Activated B cell treated with CpG ODN at 0.5 μM for 24 hours (primary cell): ENCODE measurements at regions of chr3 and their contacts with region 1.

Region 1: GRCh38 chr3:100708967-100709841 is at the start of gene TFG:
- DNase-seq: peak; percentile 97
- ATAC-seq: peak; percentile 90
- H3K4me3 Mint-ChIP-seq: peak within 1 kb of the TSS; percentile 88
- H3K27ac Mint-ChIP-seq: peak within 1 kb of the TSS; percentile 92
- H3K4me1 Mint-ChIP-seq: peaks cover 40% of the 10 kb centered on the region
- H3K27me3 Mint-ChIP-seq: peaks cover 17% of the 10 kb centered on the region
- CTCF ChIP-seq: no peak
- total RNA-seq, gene TFG: 42.5 and 44.5 TPM in 2 replicates

Region 2: DNA sequence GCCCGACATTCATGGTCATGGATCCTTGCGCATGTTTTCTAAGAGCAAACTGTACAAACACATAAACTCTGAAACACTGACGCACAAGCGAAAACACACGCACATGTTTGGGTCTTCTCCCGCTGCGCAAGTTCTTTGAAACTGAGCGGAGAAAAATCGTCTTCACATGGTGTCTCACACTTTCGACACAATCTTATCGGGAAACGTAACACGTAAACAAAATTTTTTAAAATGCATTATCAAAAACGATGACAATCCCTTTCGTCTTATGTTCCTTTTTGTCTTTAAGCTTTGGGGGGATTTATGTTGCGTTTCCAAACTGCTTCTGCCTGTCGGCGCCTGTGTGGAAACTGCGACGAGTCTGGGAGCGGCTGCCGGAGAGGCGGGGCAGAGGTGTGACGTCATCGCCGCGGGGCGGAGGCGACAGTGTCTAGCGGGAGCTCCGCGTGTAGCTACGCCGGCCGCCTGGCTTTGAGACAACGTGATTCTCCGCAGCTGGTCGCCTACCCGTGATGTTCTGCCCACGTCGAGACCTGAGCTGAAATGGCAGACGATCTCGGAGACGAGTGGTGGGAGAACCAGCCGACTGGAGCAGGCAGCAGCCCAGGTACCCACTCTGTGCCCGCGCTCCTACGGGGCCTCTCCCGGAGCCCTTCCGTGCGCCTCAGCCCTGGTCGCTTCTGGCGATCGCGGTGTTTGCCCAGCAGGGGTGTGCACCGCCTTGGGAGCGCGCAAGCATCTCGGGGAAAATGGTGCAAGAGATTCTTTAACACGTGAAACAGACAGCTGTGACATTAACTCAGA is 891.6 kb before region 1 on chr3 and contains the start of gene CMSS1:
- CTCF ChIA-PET with region 1: no interaction called
- POLR2A ChIA-PET with region 1: no interaction called
- intact Hi-C with region 1: loop called (anchors 2 kb)
- DNase-seq: peak; percentile 96
- ATAC-seq: peak; percentile 94
- H3K4me3 Mint-ChIP-seq: peak within 1 kb of the TSS; percentile 97
- H3K27ac Mint-ChIP-seq: peak within 1 kb of the TSS; percentile 99
- H3K4me1 Mint-ChIP-seq: peaks cover 37% of the 10 kb centered on the region
- H3K27me3 Mint-ChIP-seq: no peaks in the 10 kb centered on the region
- CTCF ChIP-seq: no peak
- total RNA-seq, gene CMSS1: 37.4 and 41.1 TPM in 2 replicates

Region 3: DNA sequence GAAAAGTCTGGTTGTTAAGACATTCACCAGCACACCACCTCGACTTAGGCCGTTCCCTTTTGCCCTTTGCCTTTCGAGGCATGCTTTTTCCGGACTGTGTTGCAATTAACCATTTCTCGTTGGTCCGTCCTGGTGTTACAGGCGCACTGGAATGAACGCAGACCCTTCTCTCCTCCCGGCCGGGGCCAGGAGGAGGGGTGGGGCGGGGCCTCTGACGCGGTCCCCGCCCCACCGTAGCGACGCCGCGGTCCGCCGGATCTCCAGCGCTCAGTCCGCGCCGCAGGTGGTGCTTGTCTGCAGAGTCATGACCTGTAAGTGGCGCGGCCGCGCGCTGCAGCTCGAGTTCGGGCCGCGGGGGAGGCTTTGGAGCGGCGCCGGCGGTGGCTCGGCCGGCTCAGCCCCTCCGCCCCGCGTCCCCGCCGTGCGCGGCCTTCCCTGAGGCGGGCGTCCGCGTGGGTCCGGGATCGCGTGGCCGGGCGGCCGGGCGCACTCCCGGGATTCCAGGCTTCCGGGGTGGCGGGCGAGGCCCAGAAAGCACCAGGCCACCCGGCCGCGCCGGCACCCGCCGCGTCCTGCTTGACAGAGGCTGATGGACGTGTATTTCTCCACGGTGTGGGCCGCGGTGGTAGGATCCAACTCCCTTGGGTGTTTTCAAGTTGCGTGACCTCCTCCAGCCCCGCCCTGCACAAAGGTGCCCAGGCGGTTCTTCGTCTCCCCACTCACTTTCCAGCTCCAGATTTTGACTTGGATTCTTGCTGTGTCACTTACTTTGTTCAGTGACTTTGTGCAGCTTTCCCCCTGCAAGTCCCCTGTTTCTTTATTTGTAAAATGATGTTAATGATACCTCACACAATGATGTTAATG is 374.5 kb before region 1 on chr3 and contains the start of gene NIT2:
- CTCF ChIA-PET with region 1: no interaction called
- POLR2A ChIA-PET with region 1: interaction called, 5 read pairs
- intact Hi-C with region 1: loop called (anchors 1 kb)
- DNase-seq: peak; percentile 72
- ATAC-seq: peak; percentile 96
- H3K4me3 Mint-ChIP-seq: peak within 1 kb of the TSS; percentile 91
- H3K27ac Mint-ChIP-seq: peak within 1 kb of the TSS; percentile 92
- H3K4me1 Mint-ChIP-seq: peaks cover 19% of the 10 kb centered on the region
- H3K27me3 Mint-ChIP-seq: no peaks in the 10 kb centered on the region
- CTCF ChIP-seq: no peak
- total RNA-seq, gene NIT2: 52.0 and 55.6 TPM in 2 replicates

Region 4: DNA sequence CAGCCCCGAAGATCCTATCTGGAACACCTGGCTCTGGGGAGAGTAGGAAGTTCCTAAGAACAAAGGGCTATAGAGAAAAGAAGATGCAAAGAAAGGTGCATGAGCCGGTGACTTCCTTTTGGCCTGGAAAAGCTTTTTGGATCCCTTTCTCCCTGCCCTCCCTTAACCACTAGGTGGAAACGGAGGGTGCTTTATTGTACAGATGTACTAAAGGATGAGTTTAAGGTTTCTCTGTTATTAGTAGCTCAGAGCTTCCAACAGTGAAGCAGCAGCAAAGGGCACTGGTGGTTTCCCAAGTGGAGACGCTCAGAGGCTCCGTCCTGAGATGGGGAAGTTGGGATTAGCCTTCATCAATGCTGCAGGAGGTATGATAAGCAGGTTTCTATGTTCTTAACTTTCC is 105.7 kb before region 1 on chr3:
- CTCF ChIA-PET with region 1: interaction called, 3 read pairs
- POLR2A ChIA-PET with region 1: no interaction called
- intact Hi-C with region 1: loop called (anchors 2 kb)
- DNase-seq: no peak
- ATAC-seq: peak; percentile 45
- H3K4me3 Mint-ChIP-seq: peak overlapping the region; percentile 83
- H3K27ac Mint-ChIP-seq: peak overlapping the region; percentile 97
- H3K4me1 Mint-ChIP-seq: peaks cover 27% of the 10 kb centered on the region
- H3K27me3 Mint-ChIP-seq: peaks cover 3% of the 10 kb centered on the region
- CTCF ChIP-seq: no peak

Region 5: DNA sequence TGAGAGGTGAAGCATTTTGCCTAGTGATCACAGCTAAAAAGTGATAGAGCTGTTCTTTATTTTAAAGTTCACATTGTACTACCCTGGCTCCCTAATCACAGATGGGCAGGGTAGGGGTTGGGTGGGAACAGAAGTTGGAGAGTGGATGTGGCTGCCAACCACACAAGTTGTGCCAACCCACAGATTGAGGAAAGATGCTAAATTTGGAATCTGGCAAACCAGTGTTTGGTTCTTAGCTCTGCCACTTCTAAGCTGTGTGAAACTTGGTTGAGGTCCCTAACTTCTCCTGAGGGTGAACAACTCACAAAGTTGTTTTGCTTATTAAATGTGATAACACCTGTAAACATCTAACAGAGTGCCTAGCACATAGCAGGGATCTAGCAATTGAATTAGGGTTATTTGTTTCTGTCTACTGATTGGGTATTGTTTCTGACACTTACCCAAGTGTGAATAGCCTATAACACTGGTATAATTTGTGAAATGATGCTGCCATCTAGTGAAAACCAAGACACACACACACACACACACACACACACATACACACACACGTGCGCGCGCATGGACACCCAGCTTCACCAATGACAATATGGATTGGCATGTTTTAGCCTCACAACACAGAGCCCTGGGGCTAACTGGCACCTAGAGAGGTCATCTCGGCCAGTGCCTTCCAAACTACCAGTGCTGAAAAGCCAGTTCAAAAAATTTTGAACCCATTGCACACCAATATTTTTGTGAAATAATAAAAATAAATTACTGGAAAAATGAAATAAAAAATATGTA is 74.5 kb before region 1 on chr3:
- CTCF ChIA-PET with region 1: no interaction called
- POLR2A ChIA-PET with region 1: no interaction called
- intact Hi-C with region 1: no loop called
- DNase-seq: no peak
- ATAC-seq: no peak
- H3K4me3 Mint-ChIP-seq: no peak overlapping the region
- H3K27ac Mint-ChIP-seq: no peak overlapping the region
- H3K4me1 Mint-ChIP-seq: no peaks in the 10 kb centered on the region
- H3K27me3 Mint-ChIP-seq: peaks cover 9% of the 10 kb centered on the region
- CTCF ChIP-seq: no peak

Region 6: GRCh38 chr3:101512646-101513418 is 803.6 kb after region 1 on chr3 and contains the start of gene SENP7:
- CTCF ChIA-PET with region 1: no interaction called
- POLR2A ChIA-PET with region 1: no interaction called
- intact Hi-C with region 1: loop called (anchors 1 kb)
- DNase-seq: peak; percentile 74
- ATAC-seq: peak; percentile 72
- H3K4me3 Mint-ChIP-seq: peak within 1 kb of the TSS; percentile 98
- H3K27ac Mint-ChIP-seq: peak within 1 kb of the TSS; percentile 99
- H3K4me1 Mint-ChIP-seq: peaks cover 35% of the 10 kb centered on the region
- H3K27me3 Mint-ChIP-seq: no peaks in the 10 kb centered on the region
- CTCF ChIP-seq: no peak
- total RNA-seq, gene SENP7: 18.6 and 22.1 TPM in 2 replicates

Region 7: GRCh38 chr3:101724329-101725193 is 1015.4 kb after region 1 on chr3 and contains the start of gene CEP97:
- CTCF ChIA-PET with region 1: no interaction called
- POLR2A ChIA-PET with region 1: no interaction called
- intact Hi-C with region 1: loop called (anchors 1 kb)
- DNase-seq: peak; percentile 78
- ATAC-seq: peak; percentile 92
- H3K4me3 Mint-ChIP-seq: peak within 1 kb of the TSS; percentile 98
- H3K27ac Mint-ChIP-seq: peak within 1 kb of the TSS; percentile 97
- H3K4me1 Mint-ChIP-seq: peaks cover 40% of the 10 kb centered on the region
- H3K27me3 Mint-ChIP-seq: no peaks in the 10 kb centered on the region
- CTCF ChIP-seq: no peak
- total RNA-seq, gene CEP97: 7.3 and 7.9 TPM in 2 replicates